ENCODE measurements at regions of chr7 and their contacts with region 1.

Region 1: GRCh38 chr7:105808703-105809590 is 67.5 kb downstream of the ATXN7L1 start:
- DNase-seq: peak; percentile 11 to 77 (median 38)
- ATAC-seq: peak; percentile 94
- H3K4me3 ChIP-seq: peak overlapping the region; percentile 25
- H3K4me3 Mint-ChIP-seq: peak overlapping the region in 8 of 10 donors; percentile 1 to 68 (median 31)
- H3K27ac ChIP-seq: peak overlapping the region; percentile 15
- H3K27ac Mint-ChIP-seq: peak overlapping the region in 8 of 9 donors; percentile 0 to 93 (median 45)
- H3K4me1 ChIP-seq: peaks cover 33 to 50% of the 10 kb centered on the region in 2 donors
- H3K4me1 Mint-ChIP-seq: peaks cover 40 to 73% (median 65%) of the 10 kb centered on the region in 7 donors
- H3K27me3 ChIP-seq: no peaks in the 10 kb centered on the region
- H3K27me3 Mint-ChIP-seq: no peaks in the 10 kb centered on the region

Region 2: DNA sequence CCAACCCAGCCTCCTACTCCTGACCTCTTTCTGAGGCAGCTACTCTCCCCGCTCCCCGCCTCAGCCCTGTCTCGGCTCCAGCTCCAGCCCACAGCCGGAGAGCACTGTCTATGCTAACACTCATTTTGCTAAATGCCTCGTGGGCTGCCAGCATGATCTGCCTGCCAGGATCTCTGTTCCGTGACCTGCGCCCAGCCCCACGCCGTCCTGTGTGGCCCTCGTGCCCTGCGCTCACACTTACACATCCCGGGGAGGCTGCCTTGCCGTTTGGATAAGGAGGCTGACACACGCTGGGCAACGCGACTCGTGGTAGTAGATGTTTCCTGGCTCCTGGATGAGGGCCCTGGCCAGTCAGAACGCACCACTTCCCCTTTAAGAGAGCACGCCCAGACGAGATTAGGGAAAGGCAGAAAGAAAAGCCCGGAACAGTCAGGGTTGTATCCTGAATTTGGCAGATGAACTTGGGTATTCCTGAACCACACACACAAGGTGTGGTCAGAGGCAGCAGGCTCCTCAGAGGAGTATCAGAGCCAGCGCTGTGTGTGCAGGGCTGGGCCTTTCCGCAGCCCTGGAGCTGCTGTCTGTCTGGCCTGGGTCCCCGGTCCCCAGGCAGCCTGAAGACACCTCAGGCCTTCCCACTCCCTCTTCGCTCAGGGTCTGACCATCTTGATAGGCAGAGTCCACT is 130.0 kb before region 1 on chr7:
- CTCF ChIA-PET with region 1: no interaction called
- POLR2A ChIA-PET with region 1: no interaction called
- intact Hi-C with region 1: loop called in 1 of 2 experiments (anchors 5 kb)
- DNase-seq: peak in 5 of 9 donors; percentile 11 to 33 (median 26)
- ATAC-seq: peak; percentile 47
- H3K4me3 ChIP-seq: peak overlapping the region; percentile 30
- H3K4me3 Mint-ChIP-seq: peak overlapping the region; percentile 76 to 97 (median 86)
- H3K27ac ChIP-seq: peak overlapping the region; percentile 59
- H3K27ac Mint-ChIP-seq: peak overlapping the region; percentile 87 to 99 (median 95)
- H3K4me1 ChIP-seq: peaks cover 41 to 43% of the 10 kb centered on the region in 2 donors
- H3K4me1 Mint-ChIP-seq: peaks cover 56 to 94% (median 86%) of the 10 kb centered on the region in 7 donors
- H3K27me3 ChIP-seq: no peaks in the 10 kb centered on the region
- H3K27me3 Mint-ChIP-seq: no peaks in the 10 kb centered on the region

Region 3: GRCh38 chr7:105691733-105692564 is 117.0 kb before region 1 on chr7:
- CTCF ChIA-PET with region 1: no interaction called
- POLR2A ChIA-PET with region 1: no interaction called
- intact Hi-C with region 1: loop called (anchors 2 to 5 kb)
- DNase-seq: peak; percentile 22 to 94 (median 90)
- ATAC-seq: peak; percentile 89
- H3K4me3 ChIP-seq: peak overlapping the region; percentile 94
- H3K4me3 Mint-ChIP-seq: peak overlapping the region; percentile 84 to 98 (median 92)
- H3K27ac ChIP-seq: peak overlapping the region; percentile 83
- H3K27ac Mint-ChIP-seq: peak overlapping the region; percentile 95 to 100 (median 99)
- H3K4me1 ChIP-seq: peaks cover 19 to 21% of the 10 kb centered on the region in 2 donors
- H3K4me1 Mint-ChIP-seq: peaks cover 33 to 78% (median 65%) of the 10 kb centered on the region in 7 donors
- H3K27me3 ChIP-seq: no peaks in the 10 kb centered on the region
- H3K27me3 Mint-ChIP-seq: no peaks in the 10 kb centered on the region

Region 4: DNA sequence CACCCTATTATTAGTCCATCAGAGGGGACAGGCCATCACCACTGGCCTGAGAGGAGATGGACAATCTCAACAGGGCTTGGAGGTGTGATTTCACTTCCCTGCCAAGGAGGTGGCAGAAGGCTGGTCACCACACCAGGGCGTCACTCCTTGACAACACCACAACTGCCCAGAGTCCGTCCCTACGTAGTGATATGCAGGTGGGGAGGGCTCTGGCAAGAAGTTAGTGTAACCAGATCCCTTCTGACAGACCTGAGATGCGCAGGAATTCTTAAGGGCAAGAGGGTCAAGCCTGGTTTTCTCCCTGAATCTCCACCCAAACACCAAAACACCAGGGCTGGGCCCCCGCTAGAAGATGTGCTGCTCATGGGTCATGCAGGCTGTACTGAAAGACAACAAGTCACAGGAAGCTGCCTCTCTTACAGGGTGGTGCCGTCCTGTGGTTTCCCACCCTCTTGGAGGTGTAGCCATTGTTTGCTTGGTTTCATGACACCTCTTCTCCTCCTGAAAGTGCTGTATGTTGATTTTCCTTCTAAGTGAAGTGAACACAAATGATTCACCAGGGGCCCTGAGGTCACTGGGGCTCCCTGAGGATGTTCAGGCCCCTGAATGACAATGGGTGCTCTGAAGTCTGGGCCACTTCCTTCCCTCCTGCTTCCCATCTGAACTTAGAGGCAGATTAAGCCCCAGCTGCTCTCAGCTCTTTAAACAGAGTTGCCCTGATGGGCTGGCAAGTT is 40.3 kb after region 1 on chr7:
- CTCF ChIA-PET with region 1: no interaction called
- POLR2A ChIA-PET with region 1: interaction called, 4 read pairs
- intact Hi-C with region 1: loop called (anchors 1 kb)
- DNase-seq: peak; percentile 16 to 69 (median 60)
- ATAC-seq: peak; percentile 94
- H3K4me3 ChIP-seq: peak overlapping the region; percentile 38
- H3K4me3 Mint-ChIP-seq: peak overlapping the region; percentile 74 to 85 (median 83)
- H3K27ac ChIP-seq: peak overlapping the region; percentile 43
- H3K27ac Mint-ChIP-seq: peak overlapping the region; percentile 82 to 98 (median 92)
- H3K4me1 ChIP-seq: peaks cover 46 to 47% of the 10 kb centered on the region in 2 donors
- H3K4me1 Mint-ChIP-seq: peaks cover 44 to 78% (median 69%) of the 10 kb centered on the region in 7 donors
- H3K27me3 ChIP-seq: no peaks in the 10 kb centered on the region
- H3K27me3 Mint-ChIP-seq: peaks cover 0 to 2% (median 0%) of the 10 kb centered on the region in 5 donors

Region 5: GRCh38 chr7:106346678-106347217 is 537.8 kb after region 1 on chr7:
- CTCF ChIA-PET with region 1: no interaction called
- POLR2A ChIA-PET with region 1: no interaction called
- intact Hi-C with region 1: loop called in 1 of 2 experiments (anchors 2 kb)
- DNase-seq: peak in 8 of 9 donors; percentile 28 to 61 (median 50)
- ATAC-seq: peak; percentile 78
- H3K4me3 ChIP-seq: no peak overlapping the region
- H3K4me3 Mint-ChIP-seq: peak overlapping the region in 1 of 10 donors; percentile 47
- H3K27ac ChIP-seq: no peak overlapping the region
- H3K27ac Mint-ChIP-seq: peak overlapping the region in 2 of 9 donors; percentile 19 to 94
- H3K4me1 ChIP-seq: peaks cover 6 to 19% of the 10 kb centered on the region in 2 donors
- H3K4me1 Mint-ChIP-seq: peaks cover 5 to 35% (median 13%) of the 10 kb centered on the region in 7 donors
- H3K27me3 ChIP-seq: no peaks in the 10 kb centered on the region
- H3K27me3 Mint-ChIP-seq: peaks cover 1 to 61% (median 31%) of the 10 kb centered on the region in 5 donors

Region 6: DNA sequence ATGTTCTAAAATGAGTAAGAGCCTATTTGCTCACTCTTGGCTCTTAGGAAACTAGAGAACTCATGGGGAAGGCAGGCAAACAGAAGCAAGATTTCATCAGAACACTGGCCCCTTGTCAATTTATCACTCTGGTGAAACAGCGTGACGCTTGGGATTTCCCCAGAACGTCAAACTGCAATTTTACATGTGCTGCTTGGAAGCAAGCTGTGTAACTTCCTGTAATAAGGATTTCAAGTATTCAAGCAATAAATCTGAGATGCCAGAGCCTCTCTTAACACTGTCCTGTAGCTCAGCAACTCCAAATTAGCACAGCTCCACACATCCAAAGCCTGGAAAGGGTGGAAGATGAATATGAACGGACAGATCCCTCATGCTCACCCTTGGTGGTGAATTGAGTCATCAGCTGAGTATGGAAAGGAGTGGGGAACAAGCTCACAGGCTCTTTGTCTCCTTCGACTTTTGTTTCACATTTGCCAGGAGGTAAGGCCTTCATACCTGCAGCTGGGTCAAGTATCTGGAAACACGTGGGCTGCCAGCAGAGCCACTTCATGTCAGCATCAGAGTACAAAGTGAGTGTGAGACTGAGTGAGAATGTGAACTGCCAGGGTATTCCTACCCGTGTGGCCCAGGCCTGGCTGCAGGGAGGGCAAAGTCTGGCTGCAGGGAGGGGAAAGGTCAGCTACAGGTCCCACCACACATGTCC is 616.2 kb after region 1 on chr7:
- CTCF ChIA-PET with region 1: no interaction called
- POLR2A ChIA-PET with region 1: no interaction called
- intact Hi-C with region 1: loop called in 1 of 2 experiments (anchors 10 kb)
- DNase-seq: peak in 2 of 9 donors; percentile 5 to 64
- ATAC-seq: peak; percentile 78
- H3K4me3 ChIP-seq: no peak overlapping the region
- H3K4me3 Mint-ChIP-seq: peak overlapping the region in 1 of 10 donors; percentile 58
- H3K27ac ChIP-seq: no peak overlapping the region
- H3K27ac Mint-ChIP-seq: peak overlapping the region in 1 of 9 donors; percentile 87
- H3K4me1 ChIP-seq: no peaks in the 10 kb centered on the region
- H3K4me1 Mint-ChIP-seq: peaks cover 0 to 28% (median 6%) of the 10 kb centered on the region in 7 donors
- H3K27me3 ChIP-seq: no peaks in the 10 kb centered on the region
- H3K27me3 Mint-ChIP-seq: peaks cover 0 to 36% (median 13%) of the 10 kb centered on the region in 5 donors

Measured in naive thymus-derived CD4-positive, alpha-beta T cell (primary cell).